Activated CD4-positive, alpha-beta T cell treated with anti-CD3 and anti-CD28 coated beads, Interleukin-2, amount 10 ng/mL, durations not matched to agents 24 days and 14 days (primary cell): ENCODE measurements at regions of chr17 and their contacts with region 1.

Region 1: DNA sequence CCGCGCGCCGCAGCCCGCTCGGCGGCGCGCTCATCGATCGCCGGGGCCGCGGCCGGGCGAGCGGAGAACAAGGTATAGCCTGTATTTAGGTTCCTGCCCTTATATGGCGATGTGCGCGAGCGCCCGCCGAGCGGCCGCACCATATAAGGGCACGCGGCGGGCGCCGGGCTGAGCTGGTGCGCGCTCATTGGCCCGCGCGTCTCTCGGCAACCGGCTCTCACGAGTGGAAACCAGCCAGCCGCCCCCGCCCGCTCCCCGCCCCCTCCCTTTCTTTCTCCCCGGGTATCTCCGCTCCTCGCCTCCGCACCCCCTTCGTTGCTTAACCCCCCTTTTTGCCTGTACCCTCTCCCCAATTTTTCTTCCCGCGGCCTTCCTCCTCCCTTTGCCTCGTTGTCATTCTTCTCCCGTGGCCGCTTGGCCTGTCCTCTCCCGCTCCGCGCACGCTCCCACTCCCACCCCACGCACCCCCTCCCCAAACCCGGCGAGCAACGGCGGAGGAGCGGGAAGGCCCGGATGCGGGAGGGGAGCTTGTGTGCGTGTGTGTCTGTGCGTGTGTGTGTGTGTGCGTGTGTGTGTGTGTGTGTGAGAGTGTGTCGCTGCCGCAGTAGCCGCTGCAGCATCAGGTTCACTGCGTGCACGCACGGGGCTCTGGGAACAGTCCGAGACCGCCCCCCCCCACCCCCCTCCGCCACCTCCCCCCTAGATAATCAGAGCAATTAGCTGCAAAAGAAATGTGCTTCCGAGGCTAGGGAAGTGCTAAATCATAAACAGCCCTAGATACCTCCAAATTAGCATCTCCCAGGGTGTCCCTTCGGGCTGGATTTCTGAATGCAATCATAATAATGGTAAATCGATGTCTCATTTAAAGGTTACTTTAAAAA is 13.5 kb upstream of the CBX8 start:
- DNase-seq: peak; percentile 94
- H3K4me3 Mint-ChIP-seq: peak overlapping the region; percentile 55
- H3K27ac Mint-ChIP-seq: peak overlapping the region; percentile 32
- H3K4me1 Mint-ChIP-seq: peaks cover 31% of the 10 kb centered on the region
- H3K27me3 Mint-ChIP-seq: peaks cover 56% of the 10 kb centered on the region

Region 2: DNA sequence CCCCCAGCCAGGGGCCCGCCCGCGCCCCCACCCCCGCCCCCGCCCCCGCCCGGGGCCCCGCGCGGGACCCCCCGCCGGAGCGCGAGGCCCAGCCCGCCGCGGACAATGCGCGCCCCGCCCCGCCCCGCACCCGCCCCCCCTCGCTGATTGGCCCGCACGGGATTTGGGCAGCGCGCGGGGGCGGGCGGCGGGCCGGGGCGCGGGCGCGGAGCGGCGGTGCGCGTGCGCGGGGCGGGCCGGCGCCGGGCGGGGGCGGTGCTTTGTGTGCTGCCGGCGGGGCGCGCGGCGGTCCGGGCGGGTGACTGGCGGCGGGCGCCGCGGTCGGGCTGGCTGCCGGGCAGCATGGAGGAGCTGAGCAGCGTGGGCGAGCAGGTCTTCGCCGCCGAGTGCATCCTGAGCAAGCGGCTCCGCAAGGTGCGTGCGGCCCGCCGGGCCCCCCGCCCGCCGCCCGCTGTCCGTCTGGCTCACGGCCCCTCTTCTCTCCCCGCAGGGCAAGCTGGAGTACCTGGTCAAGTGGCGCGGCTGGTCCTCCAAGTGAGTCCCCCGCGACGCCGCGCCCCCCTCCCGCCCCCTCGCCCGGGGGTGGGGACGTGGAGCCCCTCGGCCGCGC is 32.4 kb before region 1 on chr17 and contains the start of gene CBX2:
- intact Hi-C with region 1: loop called (anchors 5 kb)
- DNase-seq: peak; percentile 96
- H3K4me3 Mint-ChIP-seq: peak within 1 kb of the TSS; percentile 91
- H3K27ac Mint-ChIP-seq: peak within 1 kb of the TSS; percentile 85
- H3K4me1 Mint-ChIP-seq: peaks cover 14% of the 10 kb centered on the region
- H3K27me3 Mint-ChIP-seq: peaks cover 64% of the 10 kb centered on the region
- total RNA-seq, gene CBX2: 7.5 and 8.2 TPM in 2 replicates

Region 3: DNA sequence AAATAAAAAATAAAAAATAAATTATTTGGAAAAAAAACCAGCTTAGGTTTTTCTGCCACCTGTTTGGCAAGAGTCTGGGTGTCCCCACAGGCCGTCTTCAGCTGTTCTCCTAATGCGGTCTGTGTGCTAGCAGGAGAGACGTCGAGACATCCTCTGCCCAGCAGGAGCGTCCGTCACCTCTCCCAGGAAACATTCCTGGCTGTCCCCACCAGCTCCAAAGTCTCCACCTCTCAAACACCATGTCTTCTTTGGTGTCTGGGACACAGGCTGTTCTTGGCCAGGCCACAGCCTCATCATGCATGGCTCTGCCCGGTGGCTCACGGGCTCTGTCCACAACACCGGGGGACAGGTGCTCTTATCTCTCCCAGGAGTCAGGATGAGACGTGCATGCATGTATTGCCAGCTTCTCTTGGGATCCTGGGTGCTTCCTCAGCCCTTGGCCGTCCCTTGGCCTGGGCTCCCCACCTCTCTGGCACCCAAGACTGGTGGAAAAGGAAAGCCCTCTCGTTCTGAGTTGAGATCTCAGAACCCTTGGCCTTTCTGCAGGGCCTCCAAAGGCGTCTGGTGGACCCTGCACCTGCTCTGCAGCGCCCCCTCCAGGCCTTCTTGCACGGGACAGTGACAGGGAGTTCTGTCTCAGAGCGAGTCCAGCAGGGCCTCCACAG is 113.7 kb after region 1 on chr17:
- intact Hi-C with region 1: no loop called
- DNase-seq: peak; percentile 84
- H3K4me3 Mint-ChIP-seq: no peak overlapping the region
- H3K27ac Mint-ChIP-seq: no peak overlapping the region
- H3K4me1 Mint-ChIP-seq: peaks cover 9% of the 10 kb centered on the region
- H3K27me3 Mint-ChIP-seq: peaks cover 7% of the 10 kb centered on the region

Region 4: DNA sequence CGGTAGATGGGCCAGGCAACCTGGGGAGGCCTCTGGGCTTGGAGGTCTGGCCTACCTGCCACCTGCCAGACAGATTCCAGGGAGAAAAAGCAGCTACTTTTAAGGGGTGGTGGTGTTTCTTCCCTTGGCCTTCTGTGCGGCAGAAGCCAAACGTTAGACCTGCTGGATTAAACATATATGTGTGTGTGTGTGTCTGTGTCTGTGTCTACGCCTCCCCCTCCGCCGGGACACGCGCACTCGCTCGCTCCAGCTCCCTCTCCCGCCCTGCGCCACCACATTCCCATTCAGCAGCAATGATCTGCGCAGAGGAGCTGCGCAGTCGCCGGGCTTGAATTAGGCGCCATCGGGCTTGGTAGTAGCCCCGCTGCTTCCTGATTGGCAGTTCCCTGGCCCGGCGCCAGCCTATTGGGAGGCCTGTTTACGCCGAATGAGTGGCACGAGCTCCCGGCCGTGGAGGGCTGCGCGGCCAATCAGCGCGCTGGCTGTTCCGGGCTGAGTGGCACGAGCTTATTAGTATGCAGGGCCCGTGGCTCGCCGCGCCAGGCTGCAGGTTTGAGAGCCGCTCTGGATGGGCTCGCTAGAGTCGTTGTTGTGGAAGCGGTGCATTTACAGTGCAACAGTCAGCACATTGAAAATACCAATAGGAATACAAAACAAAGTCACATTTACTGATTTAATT is 1584.7 kb after region 1 on chr17 and contains the start of gene BAHCC1:
- intact Hi-C with region 1: loop called (anchors 10 kb)
- DNase-seq: peak; percentile 89
- H3K4me3 Mint-ChIP-seq: peak within 1 kb of the TSS; percentile 59
- H3K27ac Mint-ChIP-seq: peak within 1 kb of the TSS; percentile 78
- H3K4me1 Mint-ChIP-seq: peaks cover 16% of the 10 kb centered on the region
- H3K27me3 Mint-ChIP-seq: peaks cover 53% of the 10 kb centered on the region
- total RNA-seq, gene BAHCC1: 0.05 TPM in 1 of 2 replicates, not detected in the other